ENCODE measurements at regions of chr6 and their contacts with region 1.

Region 1: DNA sequence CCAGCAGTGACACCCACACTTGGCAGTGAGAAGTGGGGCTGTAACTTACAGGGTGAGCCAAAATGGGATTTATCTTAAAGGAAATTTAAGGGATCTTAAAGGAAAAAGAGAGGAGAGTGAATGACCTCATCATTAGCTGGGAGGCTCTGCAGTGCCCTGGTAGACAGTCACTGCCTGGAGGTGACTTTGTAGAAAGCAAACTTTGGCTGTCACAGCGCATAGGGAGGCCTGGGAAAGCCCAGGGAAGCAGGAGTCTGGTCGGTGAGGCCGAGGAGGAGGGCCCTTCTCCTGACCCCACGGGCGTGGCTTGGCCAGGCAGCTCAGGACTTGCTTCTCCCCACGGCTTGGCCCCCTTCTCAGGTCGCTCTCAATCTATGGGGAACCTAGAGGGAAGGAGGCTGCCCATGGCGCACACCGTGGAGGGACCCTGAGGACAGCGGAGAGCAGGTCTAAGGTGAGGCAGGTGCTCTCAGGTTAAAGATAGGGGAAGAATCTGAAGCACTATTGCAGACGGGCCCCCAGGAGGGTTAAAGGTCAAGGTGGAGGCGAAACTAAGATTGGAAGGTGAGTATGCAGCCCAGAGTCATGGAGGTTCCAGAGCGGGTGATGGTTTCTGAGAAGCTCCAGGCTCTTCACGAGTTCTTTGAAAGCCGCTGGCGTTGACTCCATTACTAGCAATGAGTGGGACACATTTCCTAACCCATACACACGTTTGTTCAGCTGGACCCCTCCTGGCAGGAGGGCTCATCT is 15.6 kb upstream of the RIPK1 start:
- H3K4me3 Mint-ChIP-seq: peak overlapping the region; percentile 84
- H3K27ac Mint-ChIP-seq: peak overlapping the region; percentile 87
- H3K4me1 Mint-ChIP-seq: peaks cover 32% of the 10 kb centered on the region
- H3K27me3 Mint-ChIP-seq: no peaks in the 10 kb centered on the region

Region 2: GRCh38 chr6:2846873-2847224 is 205.8 kb before region 1 on chr6:
- intact Hi-C with region 1: loop called (anchors 2 kb)
- H3K4me3 Mint-ChIP-seq: no peak overlapping the region
- H3K27ac Mint-ChIP-seq: peak overlapping the region; percentile 70
- H3K4me1 Mint-ChIP-seq: peaks cover 61% of the 10 kb centered on the region
- H3K27me3 Mint-ChIP-seq: no peaks in the 10 kb centered on the region

Region 3: DNA sequence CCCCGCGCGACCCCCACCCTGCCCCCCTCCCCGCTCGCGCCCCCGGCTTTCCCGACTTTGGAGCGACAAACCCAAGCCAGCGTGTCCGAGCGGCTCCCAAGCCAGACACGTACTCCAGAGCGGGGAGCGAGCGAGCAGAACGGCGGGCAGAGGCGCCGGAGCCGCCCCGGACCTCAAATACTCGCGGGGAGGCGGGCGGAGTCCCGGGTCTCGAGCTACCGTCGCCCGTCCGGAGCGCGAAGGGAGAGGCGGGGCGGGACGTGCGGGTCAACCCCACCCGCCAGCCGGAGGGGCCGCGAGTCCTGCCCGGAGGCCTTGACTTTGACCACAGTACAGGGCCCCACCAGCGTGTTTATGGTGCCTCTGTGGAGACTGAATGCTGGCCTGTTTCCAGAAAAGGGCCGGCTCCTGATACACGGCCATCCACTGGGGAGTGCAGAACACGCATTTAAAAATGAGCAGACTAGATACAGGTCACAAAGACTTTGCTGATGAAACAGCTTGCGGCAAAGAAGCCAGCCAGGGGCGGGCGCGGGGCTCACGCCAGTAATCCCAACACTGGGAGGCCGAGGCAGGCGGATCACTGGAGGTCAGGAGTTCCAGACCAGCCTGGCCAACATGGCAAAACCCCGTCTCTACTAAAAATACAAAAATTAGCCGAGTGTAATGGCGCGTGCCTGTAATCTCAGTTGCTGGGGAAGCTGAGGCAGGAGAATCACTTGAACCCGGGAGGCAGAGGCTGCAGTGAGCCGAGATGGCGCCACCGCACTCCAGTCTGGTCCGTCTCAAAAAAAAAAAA is 81.0 kb before region 1 on chr6 and contains the start of gene SERPINB6:
- intact Hi-C with region 1: no loop called
- H3K4me3 Mint-ChIP-seq: peak within 1 kb of the TSS; percentile 91
- H3K27ac Mint-ChIP-seq: peak within 1 kb of the TSS; percentile 96
- H3K4me1 Mint-ChIP-seq: peaks cover 39% of the 10 kb centered on the region
- H3K27me3 Mint-ChIP-seq: no peaks in the 10 kb centered on the region

Region 4: DNA sequence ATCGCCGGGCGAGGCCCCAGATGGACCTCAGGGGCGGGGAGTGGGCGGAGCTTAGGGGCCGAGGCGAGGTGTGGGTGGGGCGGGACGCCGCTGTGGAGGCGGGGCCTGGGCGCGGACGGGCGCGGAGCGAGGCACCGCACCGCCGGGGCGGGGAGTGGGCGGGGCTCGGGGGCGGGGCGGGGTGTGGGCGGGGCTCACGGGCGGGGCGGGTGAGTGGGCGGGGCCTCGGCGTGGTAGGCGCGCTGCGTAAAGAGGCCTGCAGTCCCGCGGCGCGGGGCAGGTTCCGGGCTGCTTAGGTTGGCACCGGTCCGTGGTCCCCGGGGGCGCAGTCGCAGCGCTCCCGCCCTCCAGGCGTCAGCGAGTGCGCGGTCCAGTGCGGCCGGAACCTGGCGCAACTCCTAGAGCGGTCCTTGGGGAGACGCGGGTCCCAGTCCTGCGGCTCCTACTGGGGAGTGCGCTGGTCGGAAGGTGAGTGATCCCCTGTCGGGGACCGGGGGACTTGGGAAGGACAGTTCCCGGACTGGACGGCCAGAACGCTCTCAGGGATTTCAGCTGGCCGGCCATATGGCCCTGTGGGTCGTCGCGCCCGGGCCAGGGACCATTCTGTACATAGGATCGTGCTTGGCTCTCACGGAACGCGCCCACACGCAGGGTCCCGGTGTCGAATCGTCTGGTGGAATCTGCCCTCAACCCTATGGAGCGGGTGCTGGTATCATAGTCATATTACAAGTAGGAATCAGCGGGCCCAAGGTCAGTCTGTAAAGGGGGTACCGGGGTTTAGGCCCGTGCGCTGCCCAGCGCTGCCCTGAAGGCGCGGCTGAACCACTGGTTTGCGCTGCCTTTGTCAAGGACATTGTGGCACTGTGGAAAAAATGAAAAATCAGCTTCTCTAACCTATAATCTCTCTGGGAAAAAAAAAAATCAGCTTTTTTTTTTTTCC is 52.8 kb before region 1 on chr6 and contains the start of gene NQO2:
- intact Hi-C with region 1: loop called (anchors 1 kb)
- H3K4me3 Mint-ChIP-seq: peak within 1 kb of the TSS; percentile 90
- H3K27ac Mint-ChIP-seq: peak within 1 kb of the TSS; percentile 92
- H3K4me1 Mint-ChIP-seq: peaks cover 39% of the 10 kb centered on the region
- H3K27me3 Mint-ChIP-seq: peaks cover 1% of the 10 kb centered on the region

Region 5: GRCh38 chr6:3023663-3024483 is 28.8 kb before region 1 on chr6:
- intact Hi-C with region 1: loop called (anchors 1 kb)
- H3K4me3 Mint-ChIP-seq: peak overlapping the region; percentile 100
- H3K27ac Mint-ChIP-seq: peak overlapping the region; percentile 94
- H3K4me1 Mint-ChIP-seq: peaks cover 67% of the 10 kb centered on the region
- H3K27me3 Mint-ChIP-seq: no peaks in the 10 kb centered on the region